Activated CD4-positive, alpha-beta T cell treated with anti-CD3 and anti-CD28 coated beads for 36 hours (primary cell): ENCODE measurements at regions of chr5 and their contacts with region 1.

Region 1: DNA sequence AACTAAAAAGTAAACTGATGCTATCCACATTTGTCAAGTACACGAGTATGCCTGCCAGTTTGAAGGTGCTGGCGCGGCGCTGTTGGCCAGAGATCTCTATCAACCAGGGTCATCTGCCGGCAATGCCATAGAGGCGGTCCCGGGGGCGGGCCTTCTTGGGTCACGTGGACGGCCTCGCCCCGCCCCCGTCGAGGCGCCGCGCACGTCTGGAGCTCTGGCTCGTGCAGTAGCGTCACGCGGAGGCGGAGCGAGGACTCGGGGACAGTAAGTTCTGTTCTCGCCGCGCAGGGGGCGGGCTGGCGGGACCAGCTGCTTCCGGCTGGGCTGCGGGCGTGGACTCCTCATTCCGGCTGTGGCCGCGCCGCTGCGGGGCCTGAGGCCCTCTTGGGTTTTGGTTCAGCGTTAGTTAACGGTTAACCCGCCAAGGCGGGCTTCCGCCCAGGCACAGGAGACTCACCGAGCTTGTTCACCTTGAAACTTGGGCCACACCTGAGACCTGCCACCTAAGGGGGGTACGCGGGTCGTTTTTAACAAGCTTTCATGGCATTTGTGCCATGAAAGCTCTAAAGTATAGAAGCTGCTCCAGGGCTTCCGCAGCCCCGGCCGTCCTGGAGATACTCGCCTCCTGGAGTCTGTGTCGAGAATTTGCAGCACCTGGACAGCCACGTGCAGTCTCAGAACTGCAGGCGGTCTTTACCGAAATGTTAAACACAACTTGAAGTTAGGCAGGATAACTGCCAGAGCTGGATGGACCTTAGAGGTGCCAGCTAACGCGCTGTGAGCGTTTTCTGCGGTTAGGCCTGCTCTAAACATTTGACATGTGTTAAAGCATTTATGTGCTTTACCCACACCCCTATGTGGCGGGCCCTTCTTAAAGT is at the start of gene RFESD:
- DNase-seq: peak; percentile 98
- ATAC-seq: peak; percentile 92
- H3K4me3 Mint-ChIP-seq: peak within 1 kb of the TSS; percentile 79
- H3K27ac Mint-ChIP-seq: peak within 1 kb of the TSS; percentile 87
- H3K4me1 Mint-ChIP-seq: peaks cover 42% of the 10 kb centered on the region
- H3K27me3 Mint-ChIP-seq: no peaks in the 10 kb centered on the region
- total RNA-seq, gene RFESD: 4.1 to 9.2 TPM

Region 2: DNA sequence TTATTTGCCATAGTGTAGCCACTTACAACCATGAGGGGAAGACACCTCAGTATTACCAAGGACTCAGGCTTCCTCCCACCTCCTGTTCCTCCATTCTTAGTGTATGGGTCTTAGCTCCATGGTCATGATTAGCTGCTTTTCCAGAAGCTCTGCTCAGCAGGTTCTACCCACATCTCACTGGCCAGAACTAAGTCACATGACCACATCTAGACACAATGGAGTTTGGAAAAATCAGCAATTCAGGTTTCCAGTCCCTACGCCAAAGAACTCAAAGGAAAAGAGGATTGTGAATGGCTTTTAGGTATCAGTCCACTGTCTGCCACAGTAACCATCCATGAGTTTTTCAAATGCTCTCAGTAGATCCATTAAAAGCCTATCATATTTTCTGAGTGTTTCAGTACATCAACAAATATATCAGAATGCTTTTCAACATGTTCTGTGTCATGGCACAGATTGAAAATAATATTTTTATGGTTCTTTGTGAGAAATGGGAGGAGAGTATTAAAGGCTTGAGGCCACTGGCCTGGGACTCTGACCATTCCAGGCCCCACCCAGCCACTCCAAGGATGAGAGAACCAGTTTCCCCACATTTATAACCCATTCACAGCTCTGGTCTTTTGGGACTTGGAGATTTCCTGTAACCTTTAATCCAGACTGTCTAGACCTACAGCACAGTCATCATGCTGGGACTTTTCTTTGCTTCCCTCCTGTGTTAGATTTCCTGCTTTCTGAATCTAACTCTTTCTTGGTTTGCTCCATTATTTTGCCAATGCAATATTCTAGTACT is 1418.2 kb before region 1 on chr5:
- CTCF ChIA-PET with region 1: no interaction called
- POLR2A ChIA-PET with region 1: no interaction called
- intact Hi-C with region 1: no loop called
- DNase-seq: no peak
- ATAC-seq: no peak
- H3K4me3 Mint-ChIP-seq: no peak overlapping the region
- H3K27ac Mint-ChIP-seq: no peak overlapping the region
- H3K4me1 Mint-ChIP-seq: no peaks in the 10 kb centered on the region
- H3K27me3 Mint-ChIP-seq: no peaks in the 10 kb centered on the region

Region 3: GRCh38 chr5:94793113-94793815 is 853.5 kb before region 1 on chr5:
- CTCF ChIA-PET with region 1: no interaction called
- POLR2A ChIA-PET with region 1: no interaction called
- intact Hi-C with region 1: loop called in 1 of 2 experiments (anchors 2 kb)
- DNase-seq: peak; percentile 33
- ATAC-seq: peak; percentile 97
- H3K4me3 Mint-ChIP-seq: peak overlapping the region; percentile 58
- H3K27ac Mint-ChIP-seq: peak overlapping the region; percentile 93
- H3K4me1 Mint-ChIP-seq: peaks cover 44% of the 10 kb centered on the region
- H3K27me3 Mint-ChIP-seq: no peaks in the 10 kb centered on the region

Region 4: GRCh38 chr5:95620030-95620869 is 26.5 kb before region 1 on chr5 and contains the start of gene GPR150:
- CTCF ChIA-PET with region 1: interaction called, 9 read pairs
- POLR2A ChIA-PET with region 1: no interaction called
- intact Hi-C with region 1: loop called in 1 of 2 experiments (anchors 1 kb)
- DNase-seq: peak; percentile 81
- ATAC-seq: peak; percentile 65
- H3K4me3 Mint-ChIP-seq: peak within 1 kb of the TSS; percentile 75
- H3K27ac Mint-ChIP-seq: peak within 1 kb of the TSS; percentile 73
- H3K4me1 Mint-ChIP-seq: peaks cover 47% of the 10 kb centered on the region
- H3K27me3 Mint-ChIP-seq: no peaks in the 10 kb centered on the region
- total RNA-seq, gene GPR150: 0.37 to 0.46 TPM

Region 5: GRCh38 chr5:95718203-95718602 is 71.4 kb after region 1 on chr5:
- CTCF ChIA-PET with region 1: interaction called, 4 read pairs
- POLR2A ChIA-PET with region 1: no interaction called
- intact Hi-C with region 1: loop called in 1 of 2 experiments (anchors 5 kb)
- DNase-seq: peak; percentile 51
- ATAC-seq: peak; percentile 79
- H3K4me3 Mint-ChIP-seq: no peak overlapping the region
- H3K27ac Mint-ChIP-seq: no peak overlapping the region
- H3K4me1 Mint-ChIP-seq: peaks cover 13% of the 10 kb centered on the region
- H3K27me3 Mint-ChIP-seq: peaks cover 7% of the 10 kb centered on the region

Region 6: DNA sequence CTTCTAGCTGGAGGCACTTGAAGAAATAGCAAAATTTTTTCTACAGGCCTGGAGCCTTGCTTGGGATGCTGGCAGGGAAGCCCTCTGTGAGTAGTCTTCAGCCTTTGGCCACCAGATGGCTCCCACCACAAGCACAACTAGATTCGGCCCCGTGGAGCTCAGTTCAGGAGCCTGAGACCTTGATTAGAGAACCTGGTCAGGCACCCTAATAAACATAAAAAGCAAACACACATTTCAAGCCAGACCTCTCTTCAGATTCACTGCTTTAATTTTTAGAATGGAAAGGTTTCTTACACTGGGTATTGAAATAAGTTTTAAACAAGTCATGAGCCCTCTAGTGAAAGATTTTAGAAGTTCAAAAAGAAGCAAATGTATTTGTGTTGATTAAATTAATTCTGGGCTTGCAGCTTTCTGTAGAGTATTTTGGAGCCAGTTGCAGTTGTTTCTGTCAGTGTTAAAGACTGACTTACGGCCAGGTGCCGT is 134.3 kb after region 1 on chr5:
- CTCF ChIA-PET with region 1: interaction called, 25 read pairs
- POLR2A ChIA-PET with region 1: no interaction called
- intact Hi-C with region 1: loop called (anchors 1 kb)
- DNase-seq: peak; percentile 84
- ATAC-seq: peak; percentile 99
- H3K4me3 Mint-ChIP-seq: no peak overlapping the region
- H3K27ac Mint-ChIP-seq: peak overlapping the region; percentile 12
- H3K4me1 Mint-ChIP-seq: peaks cover 5% of the 10 kb centered on the region
- H3K27me3 Mint-ChIP-seq: no peaks in the 10 kb centered on the region

Region 7: GRCh38 chr5:95846554-95847260 is 199.9 kb after region 1 on chr5:
- CTCF ChIA-PET with region 1: interaction called, 4 read pairs
- POLR2A ChIA-PET with region 1: no interaction called
- intact Hi-C with region 1: loop called (anchors 1 kb)
- DNase-seq: peak; percentile 79
- ATAC-seq: peak; percentile 54
- H3K4me3 Mint-ChIP-seq: no peak overlapping the region
- H3K27ac Mint-ChIP-seq: no peak overlapping the region
- H3K4me1 Mint-ChIP-seq: peaks cover 11% of the 10 kb centered on the region
- H3K27me3 Mint-ChIP-seq: peaks cover 4% of the 10 kb centered on the region

Region 8: DNA sequence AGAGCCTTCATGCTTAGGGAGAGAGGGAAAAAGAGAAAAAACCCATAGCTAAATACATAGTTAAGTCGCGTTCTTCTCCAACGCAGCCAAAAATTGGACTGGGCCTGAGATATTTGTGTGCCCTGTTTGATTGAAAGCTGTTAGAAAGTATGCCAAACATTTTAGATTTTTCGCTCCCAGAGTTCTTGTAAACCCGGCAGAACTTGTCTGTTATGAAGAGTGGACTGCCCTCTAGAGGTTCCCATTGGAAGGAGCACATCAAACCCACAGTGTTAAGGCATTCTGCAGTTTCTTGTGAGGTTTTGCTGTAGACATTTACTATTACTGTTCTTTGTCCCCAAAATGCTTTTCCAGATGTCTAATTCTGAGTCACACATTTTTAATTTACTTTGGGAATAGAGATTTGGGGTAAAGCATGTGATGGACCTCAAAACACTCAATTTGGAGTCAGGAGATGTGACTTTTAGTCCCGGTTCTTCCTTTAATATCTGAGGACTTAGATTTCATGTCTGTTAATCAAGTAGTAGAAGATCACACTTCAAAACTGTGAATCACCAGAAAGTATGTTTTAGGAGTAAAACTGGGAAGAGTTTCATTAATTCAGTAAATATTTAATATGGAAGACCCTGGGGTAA is 689.7 kb after region 1 on chr5:
- CTCF ChIA-PET with region 1: no interaction called
- POLR2A ChIA-PET with region 1: no interaction called
- intact Hi-C with region 1: loop called in 1 of 2 experiments (anchors 10 kb)
- DNase-seq: peak; percentile 74
- ATAC-seq: peak; percentile 82
- H3K4me3 Mint-ChIP-seq: no peak overlapping the region
- H3K27ac Mint-ChIP-seq: no peak overlapping the region
- H3K4me1 Mint-ChIP-seq: peaks cover 9% of the 10 kb centered on the region
- H3K27me3 Mint-ChIP-seq: peaks cover 26% of the 10 kb centered on the region